Activated T-helper 2 cell treated with anti-CD3 and anti-CD28 coated beads, Interferon-gamma antibody, Interleukin-2, Interleukin-4, amounts not matched to agents 10 μg/mL and 5 μg/mL and 100 μg/mL, durations not matched to agents 14 hours and 24 hours and 36 hours (primary cell): ENCODE measurements at regions of chr9 and their contacts with region 1.

Region 1: DNA sequence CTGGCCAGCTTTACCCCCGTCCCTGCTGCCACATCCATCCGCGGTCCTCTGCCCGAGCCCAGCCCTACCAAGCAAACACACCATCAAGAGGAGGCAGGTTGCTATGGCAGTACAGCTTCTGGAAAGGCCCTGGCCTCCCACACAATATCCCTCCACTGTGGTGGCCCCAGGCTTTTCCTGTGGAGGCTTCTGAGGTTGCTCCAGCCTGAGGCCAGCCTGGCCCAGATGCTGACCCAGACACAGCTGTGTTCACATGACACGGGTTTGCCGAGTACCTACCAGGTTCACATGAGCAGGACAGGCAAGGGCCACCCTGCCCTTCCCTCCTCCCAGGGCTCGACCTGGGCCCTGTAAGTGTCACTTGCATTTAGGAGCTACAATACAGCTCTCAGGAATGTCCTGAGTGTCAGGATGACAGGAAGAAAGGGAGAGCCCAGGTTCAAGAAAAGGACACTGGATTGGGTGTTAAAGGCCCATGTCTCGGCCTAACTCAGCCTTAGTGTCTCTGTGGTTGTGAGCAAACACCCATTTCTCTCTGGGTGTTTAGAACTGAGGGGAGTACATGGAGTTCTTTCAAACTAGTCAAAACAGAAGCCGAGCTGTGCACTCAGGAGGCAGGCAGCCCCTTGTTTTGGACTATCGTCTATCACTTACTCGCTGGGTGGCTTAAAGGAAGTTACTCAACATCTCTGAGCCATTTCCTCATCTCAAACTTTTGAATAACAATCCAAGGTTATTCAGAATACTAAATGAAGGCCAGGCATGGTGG is 40.2 kb downstream of the NAIF1 start:
- DNase-seq: peak; percentile 44
- H3K4me3 Mint-ChIP-seq: peak overlapping the region; percentile 65
- H3K27ac Mint-ChIP-seq: peak overlapping the region; percentile 92
- H3K4me1 Mint-ChIP-seq: peaks cover 76% of the 10 kb centered on the region
- H3K27me3 Mint-ChIP-seq: no peaks in the 10 kb centered on the region

Region 2: GRCh38 chr9:127980706-127981558 is 46.0 kb before region 1 on chr9 and contains the start of gene EEIG1:
- intact Hi-C with region 1: loop called (anchors 1 kb)
- DNase-seq: peak; percentile 97
- H3K4me3 Mint-ChIP-seq: peak within 1 kb of the TSS; percentile 90
- H3K27ac Mint-ChIP-seq: peak within 1 kb of the TSS; percentile 94
- H3K4me1 Mint-ChIP-seq: peaks cover 49% of the 10 kb centered on the region
- H3K27me3 Mint-ChIP-seq: no peaks in the 10 kb centered on the region
- total RNA-seq, gene EEIG1: 43.8 and 53.3 TPM in 2 replicates

Region 3: DNA sequence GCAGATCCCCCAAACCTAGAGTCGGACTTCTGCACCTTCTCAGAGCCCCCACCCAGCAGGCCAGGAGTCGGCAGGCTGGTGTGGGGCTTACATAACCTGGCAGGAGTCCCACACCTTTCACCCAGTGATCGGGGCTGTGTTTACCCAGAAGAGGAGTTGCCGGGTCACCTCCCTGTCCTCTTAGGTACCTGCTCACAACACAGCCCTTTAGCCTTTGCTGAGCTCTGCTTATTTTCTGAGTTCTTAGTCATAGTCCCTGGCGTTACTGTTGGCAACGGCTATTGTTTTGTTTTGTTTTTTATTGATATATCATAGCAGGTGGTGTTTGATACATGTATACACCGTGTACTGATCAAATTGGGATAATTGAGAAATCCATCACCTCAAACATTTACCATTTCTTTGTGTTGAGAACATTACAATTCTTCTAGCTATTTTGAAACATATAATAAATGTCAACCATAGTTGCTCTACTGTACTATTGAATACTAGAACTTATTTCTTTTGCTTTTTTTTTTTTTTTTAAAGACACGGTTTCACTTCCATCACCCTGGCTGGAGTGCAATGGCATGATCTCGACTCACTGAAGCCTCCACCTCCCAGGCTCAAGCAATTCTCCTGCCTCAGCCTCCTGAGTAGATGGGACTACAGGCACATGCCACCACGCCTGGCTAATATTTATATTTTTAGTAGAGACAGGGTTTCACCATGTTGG is 35.8 kb before region 1 on chr9:
- intact Hi-C with region 1: no loop called
- DNase-seq: no peak
- H3K4me3 Mint-ChIP-seq: no peak overlapping the region
- H3K27ac Mint-ChIP-seq: no peak overlapping the region
- H3K4me1 Mint-ChIP-seq: peaks cover 11% of the 10 kb centered on the region
- H3K27me3 Mint-ChIP-seq: no peaks in the 10 kb centered on the region

Region 4: GRCh38 chr9:128007566-128008138 is 19.3 kb before region 1 on chr9:
- intact Hi-C with region 1: loop called (anchors 1 kb)
- DNase-seq: peak; percentile 72
- H3K4me3 Mint-ChIP-seq: peak overlapping the region; percentile 46
- H3K27ac Mint-ChIP-seq: peak overlapping the region; percentile 93
- H3K4me1 Mint-ChIP-seq: peaks cover 34% of the 10 kb centered on the region
- H3K27me3 Mint-ChIP-seq: peaks cover 2% of the 10 kb centered on the region

Region 5: GRCh38 chr9:128094166-128094967 is 67.4 kb after region 1 on chr9:
- intact Hi-C with region 1: loop called (anchors 1 kb)
- DNase-seq: peak; percentile 77
- H3K4me3 Mint-ChIP-seq: peak overlapping the region; percentile 60
- H3K27ac Mint-ChIP-seq: peak overlapping the region; percentile 98
- H3K4me1 Mint-ChIP-seq: peaks cover 66% of the 10 kb centered on the region
- H3K27me3 Mint-ChIP-seq: no peaks in the 10 kb centered on the region